Activated naive CD4-positive, alpha-beta T cell treated with anti-CD3 and anti-CD28 coated beads for 36 hours (primary cell): ENCODE measurements at regions of chr6 and their contacts with region 1.

Region 1: DNA sequence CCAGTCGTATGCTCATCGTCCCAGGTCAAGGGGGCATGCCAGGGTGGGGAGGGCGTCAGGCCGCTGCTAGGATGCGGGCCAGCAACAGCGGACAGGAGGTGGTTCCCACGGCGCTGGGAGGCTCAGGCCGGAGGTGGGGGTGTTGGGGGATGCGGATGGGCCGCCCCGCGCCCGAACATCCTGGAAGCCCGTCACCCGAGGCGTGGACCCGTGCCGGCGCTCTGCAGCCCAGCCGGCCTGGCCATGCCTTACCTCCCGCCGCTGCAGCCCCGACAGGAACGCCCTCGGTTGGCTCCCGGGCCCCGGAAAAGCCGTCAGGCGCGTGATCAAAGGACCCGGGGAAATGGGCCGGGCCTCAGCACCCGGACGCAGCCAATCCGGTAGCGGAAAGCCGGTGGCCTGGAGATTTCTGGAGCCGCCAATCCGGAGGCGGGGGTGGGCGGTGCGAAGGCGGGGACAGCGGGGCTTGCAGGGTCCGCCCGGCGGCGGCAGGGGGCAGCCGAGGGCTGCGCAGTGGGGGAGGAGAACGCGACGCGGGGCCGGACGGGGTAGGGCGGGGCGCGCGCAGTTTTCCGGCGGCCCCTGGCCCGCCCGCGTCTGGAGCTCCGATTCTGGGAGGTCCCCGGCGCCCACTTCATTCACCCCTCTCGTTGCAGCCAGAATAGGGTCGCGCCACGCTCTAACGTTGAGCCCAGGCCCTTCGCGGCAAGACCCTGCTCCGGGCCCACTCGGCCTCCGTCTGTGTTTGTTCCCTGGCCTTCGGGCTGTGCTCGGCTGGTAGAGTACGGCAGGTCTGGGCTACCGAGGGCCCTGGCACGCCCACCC is at the start of gene SMIM29:
- DNase-seq: peak; percentile 98
- H3K4me3 Mint-ChIP-seq: peak within 1 kb of the TSS; percentile 93
- H3K27ac Mint-ChIP-seq: peak within 1 kb of the TSS; percentile 88
- H3K4me1 Mint-ChIP-seq: peaks cover 49% of the 10 kb centered on the region
- H3K27me3 Mint-ChIP-seq: no peaks in the 10 kb centered on the region
- total RNA-seq, gene SMIM29: 11.7 to 13.8 TPM

Region 2: GRCh38 chr6:34196126-34196830 is 52.7 kb before region 1 on chr6:
- CTCF ChIA-PET with region 1: interaction called, 19 read pairs
- intact Hi-C with region 1: loop called (anchors 1 kb)
- DNase-seq: peak; percentile 90
- H3K4me3 Mint-ChIP-seq: peak overlapping the region; percentile 73
- H3K27ac Mint-ChIP-seq: peak overlapping the region; percentile 63
- H3K4me1 Mint-ChIP-seq: peaks cover 9% of the 10 kb centered on the region
- H3K27me3 Mint-ChIP-seq: no peaks in the 10 kb centered on the region

Region 3: DNA sequence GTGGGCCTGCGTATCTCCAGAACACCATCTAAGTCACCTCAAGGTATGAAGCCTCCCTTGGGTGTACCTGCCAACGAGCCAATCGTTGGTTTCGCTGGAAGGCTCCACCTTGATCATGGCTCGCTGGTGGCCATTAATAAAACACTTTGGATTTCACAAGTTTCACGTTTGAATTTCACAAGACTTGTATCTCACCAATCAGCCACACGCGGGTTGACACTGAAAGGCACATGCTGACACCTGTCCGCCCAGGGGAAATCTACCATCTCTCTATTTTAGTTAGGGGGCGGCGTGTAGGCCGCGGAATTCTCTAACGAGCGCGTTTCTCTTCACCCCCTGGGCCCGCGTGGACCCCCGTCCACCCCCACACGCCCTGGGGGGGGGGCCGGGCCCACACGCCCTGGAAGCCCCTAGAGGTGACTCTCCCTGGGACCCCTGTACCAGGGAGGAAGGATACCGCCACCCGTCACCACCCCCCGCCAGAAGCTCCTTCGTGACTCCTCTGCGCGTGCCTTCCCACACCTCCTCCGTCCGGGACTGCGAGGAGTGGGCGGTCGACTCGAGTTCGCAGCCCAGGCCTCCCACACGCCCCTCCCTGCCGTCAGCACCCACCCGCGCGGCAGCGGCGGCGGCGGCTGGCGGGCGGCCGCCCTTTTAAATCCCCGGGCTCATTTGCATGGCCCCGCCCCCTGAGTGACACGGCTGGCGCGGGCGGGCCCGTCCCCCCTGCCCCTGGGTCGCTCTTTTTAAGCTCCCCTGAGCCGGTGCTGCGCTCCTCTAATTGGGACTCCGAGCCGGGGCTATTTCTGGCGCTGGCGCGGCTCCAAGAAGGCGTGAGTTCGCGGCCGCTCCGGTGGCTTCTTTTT is 12.6 kb before region 1 on chr6 and contains the start of gene HMGA1:
- CTCF ChIA-PET with region 1: no interaction called
- intact Hi-C with region 1: loop called (anchors 1 kb)
- DNase-seq: peak; percentile 89
- H3K4me3 Mint-ChIP-seq: peak within 1 kb of the TSS; percentile 91
- H3K27ac Mint-ChIP-seq: peak within 1 kb of the TSS; percentile 93
- H3K4me1 Mint-ChIP-seq: peaks cover 42% of the 10 kb centered on the region
- H3K27me3 Mint-ChIP-seq: no peaks in the 10 kb centered on the region
- total RNA-seq, gene HMGA1: 705 to 712 TPM

Region 4: GRCh38 chr6:34284563-34285447 is 35.9 kb after region 1 on chr6:
- CTCF ChIA-PET with region 1: no interaction called
- intact Hi-C with region 1: no loop called
- DNase-seq: no peak
- H3K4me3 Mint-ChIP-seq: no peak overlapping the region
- H3K27ac Mint-ChIP-seq: no peak overlapping the region
- H3K4me1 Mint-ChIP-seq: peaks cover 13% of the 10 kb centered on the region
- H3K27me3 Mint-ChIP-seq: no peaks in the 10 kb centered on the region

Region 5: GRCh38 chr6:34414999-34415858 is 166.3 kb after region 1 on chr6:
- CTCF ChIA-PET with region 1: interaction called, 54 read pairs
- intact Hi-C with region 1: loop called (anchors 1 kb)
- DNase-seq: peak; percentile 46
- H3K4me3 Mint-ChIP-seq: no peak overlapping the region
- H3K27ac Mint-ChIP-seq: no peak overlapping the region
- H3K4me1 Mint-ChIP-seq: peaks cover 12% of the 10 kb centered on the region
- H3K27me3 Mint-ChIP-seq: no peaks in the 10 kb centered on the region

Region 6: GRCh38 chr6:34526992-34527728 is 278.2 kb after region 1 on chr6:
- CTCF ChIA-PET with region 1: interaction called, 3 read pairs
- intact Hi-C with region 1: loop called (anchors 2 kb)
- DNase-seq: peak; percentile 97
- H3K4me3 Mint-ChIP-seq: peak overlapping the region; percentile 38
- H3K27ac Mint-ChIP-seq: no peak overlapping the region
- H3K4me1 Mint-ChIP-seq: peaks cover 6% of the 10 kb centered on the region
- H3K27me3 Mint-ChIP-seq: no peaks in the 10 kb centered on the region

Region 7: DNA sequence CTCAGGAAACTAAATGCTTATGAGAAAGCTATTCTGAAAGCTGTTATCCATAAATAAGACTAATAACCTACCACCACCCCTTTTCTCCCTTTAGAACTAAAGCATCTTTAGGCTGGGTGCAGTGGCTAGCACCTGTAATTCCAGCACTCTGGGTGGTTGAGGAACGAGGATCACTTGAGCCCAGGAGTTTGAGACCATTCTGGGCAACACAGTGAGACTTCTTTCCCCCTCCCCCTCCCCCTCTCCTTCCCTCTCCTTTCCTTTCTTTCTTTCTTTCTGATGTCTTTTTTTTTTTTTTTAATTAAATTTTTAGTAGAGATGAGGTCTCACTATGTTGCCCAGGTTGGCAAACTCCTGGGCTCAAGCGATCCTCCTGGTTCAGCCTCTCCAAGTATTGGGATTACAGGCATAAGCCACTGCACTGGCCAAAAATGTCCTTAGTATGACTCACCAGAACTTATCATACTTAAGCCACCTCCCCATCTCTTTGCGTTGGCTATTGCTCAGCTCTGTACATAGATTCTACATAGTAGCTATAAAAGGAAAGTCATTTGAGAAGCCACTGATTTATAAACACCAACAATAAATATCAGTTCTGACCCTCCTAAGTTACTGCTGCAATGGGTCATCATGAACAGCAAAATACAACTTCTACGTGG is 362.0 kb after region 1 on chr6:
- CTCF ChIA-PET with region 1: interaction called, 24 read pairs
- intact Hi-C with region 1: loop called (anchors 1 kb)
- DNase-seq: no peak
- H3K4me3 Mint-ChIP-seq: no peak overlapping the region
- H3K27ac Mint-ChIP-seq: no peak overlapping the region
- H3K4me1 Mint-ChIP-seq: peaks cover 12% of the 10 kb centered on the region
- H3K27me3 Mint-ChIP-seq: no peaks in the 10 kb centered on the region